PC-3 (cell line): ENCODE measurements at regions of chr13 and their contacts with region 1.

Region 1: DNA sequence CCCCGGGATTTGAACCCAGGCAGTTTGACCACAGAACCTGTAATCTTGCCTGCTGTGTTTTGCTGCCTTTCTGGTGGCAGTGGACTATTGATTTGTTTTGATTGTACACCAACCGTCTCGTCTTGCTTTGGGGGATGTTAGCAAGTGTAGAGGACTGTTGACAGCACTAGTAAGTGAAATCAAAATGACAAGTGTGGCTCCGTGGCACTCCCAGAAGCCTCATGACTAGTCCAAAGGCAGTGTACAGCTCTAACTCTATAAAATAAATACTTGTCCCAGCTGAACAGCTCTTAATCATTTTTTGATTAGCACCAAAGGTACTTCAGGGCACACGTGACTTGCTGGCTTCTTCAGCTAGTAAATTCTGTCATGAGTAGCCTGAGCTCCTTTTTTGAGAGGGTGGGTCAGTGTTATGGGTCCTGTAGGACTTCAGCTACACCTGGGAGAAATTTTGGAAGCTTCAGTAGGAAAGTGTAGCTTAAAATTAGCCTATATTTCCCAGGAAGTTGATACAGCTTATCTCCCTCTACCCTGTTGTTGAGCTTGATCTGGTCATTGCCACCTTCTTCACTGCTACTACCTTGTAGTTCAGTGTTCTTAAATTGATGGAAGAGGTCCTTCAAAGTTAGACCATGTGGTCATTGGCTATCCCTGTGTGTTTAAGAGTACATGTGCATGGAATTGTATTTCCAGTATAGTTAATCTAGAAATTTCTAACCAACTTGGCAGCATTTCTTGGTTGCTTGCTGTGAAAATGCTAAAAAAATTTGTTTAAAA is 15.1 kb downstream of the TM9SF2 start:
- DNase-seq: no peak
- ATAC-seq: no peak
- H3K4me3 ChIP-seq: no peak overlapping the region
- H3K27ac ChIP-seq: peak overlapping the region; percentile 34
- H3K4me1 ChIP-seq: peaks cover 10% of the 10 kb centered on the region; the same call in 1 of the 2 replicates
- H3K27me3 ChIP-seq: no peaks in the 10 kb centered on the region
- CTCF ChIP-seq: no peak

Region 2: DNA sequence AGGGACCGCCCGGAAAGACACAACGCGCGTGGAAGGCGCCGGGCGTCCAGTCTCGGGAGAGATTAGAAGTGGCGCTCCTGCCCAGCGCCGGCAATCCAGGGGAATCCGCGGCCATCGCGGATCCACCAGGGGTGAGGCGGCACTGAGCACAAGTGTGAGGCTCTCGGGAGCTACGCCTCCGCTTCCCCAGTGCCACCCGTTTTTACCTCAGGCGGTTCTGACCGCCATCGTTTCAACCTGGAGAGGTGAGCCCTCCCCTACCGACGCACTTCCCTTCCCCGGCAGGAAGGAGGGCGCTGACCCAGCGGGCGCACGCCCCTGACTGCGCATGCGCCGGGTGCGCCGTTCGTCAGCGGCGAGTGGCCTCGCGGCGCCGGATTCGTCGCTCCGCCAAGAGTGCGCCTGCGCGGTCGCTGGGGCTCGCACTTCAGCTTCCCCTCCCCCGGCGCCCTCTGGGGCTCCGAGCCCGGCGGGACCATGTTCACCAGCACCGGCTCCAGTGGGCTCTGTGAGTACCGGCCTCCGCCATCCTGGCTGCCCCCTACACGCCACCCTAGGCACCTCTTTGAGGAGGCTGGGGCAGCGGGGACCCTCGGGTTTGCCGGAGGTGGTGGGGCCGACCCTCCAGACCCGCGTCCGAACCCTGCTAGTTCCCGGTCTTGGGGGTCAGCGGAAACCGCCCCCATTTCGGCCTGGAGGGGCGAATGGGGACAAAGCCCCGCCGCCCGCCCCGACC is 315.7 kb before region 1 on chr13 and contains the start of gene UBAC2:
- CTCF ChIA-PET with region 1: no interaction called
- POLR2A ChIA-PET with region 1: no interaction called
- intact Hi-C with region 1: loop called (anchors 10 kb)
- DNase-seq: peak; percentile 94
- ATAC-seq: peak; percentile 64
- H3K4me3 ChIP-seq: peak within 1 kb of the TSS; percentile 99
- H3K27ac ChIP-seq: peak within 1 kb of the TSS; percentile 93
- H3K4me1 ChIP-seq: peaks cover 46% of the 10 kb centered on the region
- H3K27me3 ChIP-seq: no peaks in the 10 kb centered on the region
- CTCF ChIP-seq: no peak
- total RNA-seq, gene UBAC2: 34.5 and 37.1 TPM in 2 replicates

Region 3: DNA sequence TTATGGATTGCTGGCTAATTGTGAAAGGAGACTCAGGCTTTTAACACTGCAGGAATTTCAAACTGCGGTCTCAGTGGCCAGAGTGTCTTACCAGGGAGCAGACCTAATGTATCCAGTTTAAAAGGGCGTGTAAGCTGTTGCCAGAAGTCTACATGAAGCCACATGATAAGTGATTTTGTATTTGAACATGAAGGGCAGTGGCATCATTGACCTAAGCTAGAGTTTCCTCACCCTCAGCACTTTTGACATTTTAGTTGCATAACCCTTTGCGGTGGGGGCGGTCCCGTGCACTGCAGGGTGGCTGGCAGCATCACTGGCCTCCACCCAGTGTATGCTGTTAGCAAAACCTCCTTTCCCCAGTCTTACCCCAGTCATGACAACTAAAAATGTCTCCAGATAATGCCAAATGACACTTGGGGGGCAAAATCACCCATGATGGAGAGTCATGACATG is 234.5 kb before region 1 on chr13:
- CTCF ChIA-PET with region 1: no interaction called
- POLR2A ChIA-PET with region 1: no interaction called
- intact Hi-C with region 1: no loop called
- DNase-seq: no peak
- ATAC-seq: no peak
- H3K4me3 ChIP-seq: no peak overlapping the region
- H3K27ac ChIP-seq: no peak overlapping the region
- H3K4me1 ChIP-seq: no peaks in the 10 kb centered on the region
- H3K27me3 ChIP-seq: no peaks in the 10 kb centered on the region
- CTCF ChIP-seq: no peak

Region 4: GRCh38 chr13:99501184-99501847 is 15.0 kb before region 1 on chr13 and contains the start of gene TM9SF2:
- CTCF ChIA-PET with region 1: interaction called, 5 read pairs
- POLR2A ChIA-PET with region 1: interaction called, 3 read pairs
- intact Hi-C with region 1: loop called (anchors 2 kb)
- DNase-seq: peak; percentile 92
- ATAC-seq: peak; percentile 63
- H3K4me3 ChIP-seq: peak within 1 kb of the TSS; percentile 93
- H3K27ac ChIP-seq: peak within 1 kb of the TSS; percentile 69
- H3K4me1 ChIP-seq: peaks cover 52% of the 10 kb centered on the region
- H3K27me3 ChIP-seq: no peaks in the 10 kb centered on the region
- CTCF ChIP-seq: no peak
- total RNA-seq, gene TM9SF2: 80.7 and 84.6 TPM in 2 replicates

Region 5: DNA sequence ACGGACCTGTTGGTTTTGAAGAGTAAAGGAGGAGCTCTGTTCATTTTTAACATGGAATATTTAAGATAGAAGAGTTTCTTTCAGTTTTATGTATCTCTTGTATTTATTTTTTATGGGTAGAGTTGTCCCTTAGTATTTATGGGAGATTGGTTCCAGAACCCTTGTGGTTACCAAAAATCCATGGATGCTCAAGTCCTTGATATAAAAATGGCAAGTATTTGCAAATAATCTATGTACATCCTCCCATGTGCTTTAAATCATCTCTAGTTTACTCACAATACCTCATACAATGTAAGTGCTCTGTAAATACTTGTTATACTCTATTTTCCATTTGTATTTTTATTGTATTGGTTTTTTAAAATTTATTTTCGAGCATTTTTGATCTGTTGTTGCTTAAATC is 48.0 kb after region 1 on chr13:
- CTCF ChIA-PET with region 1: no interaction called
- POLR2A ChIA-PET with region 1: interaction called, 11 read pairs
- intact Hi-C with region 1: no loop called
- DNase-seq: no peak
- ATAC-seq: no peak
- H3K4me3 ChIP-seq: no peak overlapping the region
- H3K27ac ChIP-seq: no peak overlapping the region
- H3K4me1 ChIP-seq: no peaks in the 10 kb centered on the region
- H3K27me3 ChIP-seq: no peaks in the 10 kb centered on the region
- CTCF ChIP-seq: no peak

Region 6: GRCh38 chr13:99796175-99796819 is 280.0 kb after region 1 on chr13:
- CTCF ChIA-PET with region 1: no interaction called
- POLR2A ChIA-PET with region 1: no interaction called
- intact Hi-C with region 1: no loop called
- DNase-seq: peak; percentile 56
- ATAC-seq: no peak
- H3K4me3 ChIP-seq: no peak overlapping the region
- H3K27ac ChIP-seq: no peak overlapping the region
- H3K4me1 ChIP-seq: no peaks in the 10 kb centered on the region
- H3K27me3 ChIP-seq: no peaks in the 10 kb centered on the region
- CTCF ChIP-seq: no peak